Posterior cingulate gyrus (tissue), 11 donors: ENCODE measurements at regions of chr3 and their contacts with region 1.

Region 1: GRCh38 chr3:184727357-184728009 is 15.6 kb upstream of the MAGEF1 start:
- DNase-seq: peak in 5 of 10 donors; percentile 33 to 68 (median 51)

Region 2: DNA sequence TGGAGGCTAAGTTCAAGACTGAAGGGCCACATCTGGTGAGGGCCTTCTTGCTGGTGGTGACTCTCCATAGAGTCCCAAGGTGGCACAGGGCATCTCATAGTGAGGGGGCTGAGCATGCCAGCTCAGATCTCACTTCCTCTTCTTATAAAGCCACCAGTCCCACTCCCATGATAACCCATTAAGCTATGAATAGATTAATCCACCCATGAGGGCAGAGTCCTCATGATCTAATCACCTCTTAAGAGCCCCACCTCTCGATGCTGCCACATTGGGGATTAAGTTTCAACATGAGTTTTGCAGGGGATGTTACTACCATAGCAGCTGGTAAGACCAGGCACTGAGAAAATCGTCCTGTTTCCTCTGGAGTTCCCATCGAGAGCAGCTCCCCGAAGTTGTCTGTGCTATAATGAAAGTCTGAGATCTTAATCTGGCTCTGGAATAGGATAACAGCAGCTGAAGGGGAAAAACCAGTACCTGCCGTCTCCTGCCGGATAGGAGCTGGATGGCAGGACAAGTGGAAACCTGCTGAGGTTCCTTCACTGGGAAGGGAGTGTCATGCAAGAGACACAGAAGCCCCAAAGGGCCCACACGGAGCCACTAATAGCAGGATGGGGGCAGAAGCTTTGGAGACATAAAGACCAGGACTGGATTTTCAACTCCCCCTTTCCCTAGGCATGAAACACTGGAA is 245.4 kb before region 1 on chr3:
- intact Hi-C with region 1: no loop called
- DNase-seq: peak in 1 of 10 donors; percentile 22

Region 3: GRCh38 chr3:184561061-184561912 is 166.2 kb before region 1 on chr3 and contains the start of gene EPHB3:
- intact Hi-C with region 1: loop called (anchors 1 kb)
- DNase-seq: peak; percentile 97 to 100 (median 100)

Region 4: DNA sequence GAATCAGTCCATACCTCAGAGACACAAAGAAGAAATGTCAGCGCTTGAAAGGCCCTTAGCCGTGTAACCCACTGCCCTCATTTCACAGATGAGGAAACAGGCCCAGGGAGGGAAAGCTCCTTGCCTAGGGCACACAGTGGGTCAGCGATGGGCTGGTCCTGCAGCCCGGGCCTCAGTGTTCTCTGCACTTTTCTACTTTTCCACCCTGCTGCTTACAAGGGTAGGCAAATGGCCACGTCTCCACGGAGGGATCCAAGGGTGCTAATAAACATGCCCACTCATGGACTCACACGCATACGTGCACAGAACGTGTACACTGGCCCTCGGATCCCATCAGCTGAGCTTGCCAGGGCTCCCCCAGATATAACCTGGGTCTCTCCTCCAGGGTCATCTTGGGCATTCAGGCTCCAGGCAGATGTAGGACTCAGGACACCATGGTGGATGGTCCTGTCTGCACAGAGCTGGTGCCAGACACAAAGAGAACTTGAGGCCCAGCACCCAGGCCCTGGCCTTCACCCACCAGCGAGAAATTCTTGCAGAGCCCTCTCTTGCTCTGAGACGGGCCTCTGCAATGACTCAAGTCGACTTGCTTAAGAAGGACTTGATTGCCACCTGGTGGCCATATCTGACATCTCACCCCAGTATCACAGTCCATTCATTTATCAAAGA is 50.0 kb after region 1 on chr3:
- intact Hi-C with region 1: loop called (anchors 2 kb)
- DNase-seq: peak; percentile 54 to 97 (median 92)